ENCODE measurements at regions of chr18 and their contacts with region 1.

Region 1: DNA sequence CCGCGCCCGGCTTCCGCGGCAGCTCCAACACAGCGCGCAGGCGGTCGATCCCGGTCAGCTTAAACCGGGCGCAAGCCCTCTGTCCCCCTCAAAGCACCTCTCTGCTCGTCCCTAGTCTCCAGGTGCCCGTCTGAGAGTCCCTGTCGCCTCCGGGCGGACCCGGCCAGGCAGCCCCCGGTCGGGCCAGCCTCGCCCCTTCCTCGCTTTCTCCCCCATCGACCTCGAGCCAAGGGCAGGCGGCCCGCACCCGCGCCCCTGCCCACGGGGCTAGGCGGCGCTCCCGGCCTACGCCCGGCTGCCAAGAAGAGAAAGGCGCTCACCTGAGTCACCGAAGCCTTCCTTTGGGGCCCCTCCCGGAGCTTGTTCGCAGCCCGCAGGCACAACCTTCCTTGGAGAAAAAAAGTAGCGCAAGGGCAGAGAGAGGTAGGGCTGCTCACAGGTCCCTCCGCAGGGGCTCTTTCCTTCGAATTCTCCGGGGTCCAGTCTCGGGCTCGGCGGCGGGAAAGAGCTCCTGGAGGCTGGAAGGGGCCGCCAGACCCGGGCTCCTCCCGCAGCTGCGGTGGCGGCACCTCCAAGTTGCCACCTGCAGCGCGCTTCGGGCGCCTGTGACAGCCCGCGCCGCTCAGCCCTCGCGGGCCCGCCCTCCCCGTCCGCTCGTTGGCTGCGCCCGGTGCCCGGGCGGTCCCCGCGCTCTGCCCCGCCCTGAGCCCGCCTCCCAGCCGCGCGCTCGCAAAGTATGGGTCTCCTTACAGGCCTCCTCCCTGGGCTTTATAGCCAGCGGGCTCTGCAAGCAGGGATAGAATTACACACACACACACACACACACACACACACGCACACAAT is 86.5 kb upstream of the EPB41L3 start:
- DNase-seq: peak; percentile 82
- H3K4me3 Mint-ChIP-seq: peak overlapping the region; percentile 78
- H3K27ac Mint-ChIP-seq: no peak overlapping the region
- H3K4me1 Mint-ChIP-seq: peaks cover 3% of the 10 kb centered on the region
- H3K27me3 Mint-ChIP-seq: peaks cover 29% of the 10 kb centered on the region

Region 2: DNA sequence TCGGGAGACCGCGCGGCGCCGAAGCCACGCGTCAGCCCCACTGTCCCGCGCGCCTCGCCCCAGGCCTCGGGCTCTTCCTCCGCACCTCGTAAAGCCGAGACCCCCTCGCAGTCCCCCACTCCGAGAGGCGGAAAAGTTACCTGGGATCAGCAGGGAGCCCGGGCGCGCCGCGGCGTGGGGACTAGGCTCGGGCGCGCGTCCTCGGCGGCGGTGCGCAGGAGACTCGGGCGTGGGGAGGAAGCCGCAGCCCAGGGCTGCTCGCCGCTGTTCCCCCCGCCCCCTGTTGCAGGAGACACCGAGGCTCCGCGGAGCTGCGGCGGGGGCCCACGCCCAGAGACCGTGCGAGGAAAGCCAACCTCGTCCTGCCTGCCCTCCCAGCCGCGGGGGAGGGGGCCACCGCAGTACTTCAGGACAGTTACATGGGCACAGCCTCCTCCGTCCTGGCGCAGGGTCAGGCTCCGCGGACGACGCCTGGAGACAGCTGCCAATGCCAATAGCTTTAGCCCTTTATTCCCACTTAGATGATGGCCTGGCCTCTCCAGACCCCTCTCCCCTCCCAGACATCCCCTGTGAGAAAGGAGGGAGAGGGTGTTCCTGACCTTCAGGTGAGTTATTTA is 86.4 kb before region 1 on chr18 and contains the start of gene EPB41L3:
- intact Hi-C with region 1: loop called (anchors 5 kb)
- DNase-seq: no peak
- H3K4me3 Mint-ChIP-seq: no peak within 1 kb of the TSS
- H3K27ac Mint-ChIP-seq: no peak within 1 kb of the TSS
- H3K4me1 Mint-ChIP-seq: peaks cover 2% of the 10 kb centered on the region
- H3K27me3 Mint-ChIP-seq: peaks cover 44% of the 10 kb centered on the region
- total RNA-seq, gene EPB41L3: 1.5 TPM in 2 replicates

Region 3: DNA sequence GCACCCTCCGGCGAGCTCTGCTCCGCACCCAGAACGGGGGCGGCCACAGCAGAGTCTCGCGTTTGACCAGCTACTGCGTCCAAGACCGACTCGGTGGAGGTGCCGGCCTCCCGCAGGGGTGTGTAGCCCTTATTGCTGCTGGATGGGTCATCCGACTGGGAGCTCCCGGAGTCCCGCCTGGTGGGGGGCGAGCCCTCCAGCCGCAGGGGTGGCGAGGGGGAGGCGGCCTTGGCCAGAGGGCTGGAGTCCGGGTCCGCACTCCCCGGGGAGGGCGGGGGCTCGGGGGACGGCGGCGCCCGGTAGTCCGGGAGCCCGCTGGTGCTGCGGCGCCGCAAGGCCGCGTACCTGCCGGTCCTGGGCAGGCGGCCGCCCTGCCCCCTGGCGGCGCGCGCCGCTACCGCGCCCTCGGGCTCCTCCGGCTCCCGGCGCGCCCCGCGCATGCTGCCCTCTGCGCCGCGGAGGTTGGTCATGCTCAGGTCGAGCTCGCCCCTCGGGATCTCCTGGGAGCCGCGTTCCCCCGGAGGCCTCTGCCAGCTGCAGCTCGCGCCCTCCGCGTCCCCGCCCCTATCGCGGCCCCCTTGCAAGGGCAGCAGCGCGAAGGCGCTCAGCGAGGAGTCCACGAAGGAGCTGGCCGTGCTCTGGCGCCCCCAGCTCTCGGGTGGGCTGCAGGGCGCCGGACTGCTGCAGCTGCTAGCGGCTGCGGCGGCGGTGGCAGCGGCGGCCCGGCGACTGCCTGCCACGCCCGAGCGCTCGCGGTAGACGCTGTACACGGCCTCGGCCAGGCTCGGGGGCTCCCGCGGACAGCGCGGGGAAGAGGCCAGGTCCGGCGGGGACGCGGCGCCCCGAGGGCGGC is 260.3 kb after region 1 on chr18:
- intact Hi-C with region 1: loop called (anchors 10 kb)
- DNase-seq: peak; percentile 69
- H3K4me3 Mint-ChIP-seq: no peak overlapping the region
- H3K27ac Mint-ChIP-seq: no peak overlapping the region
- H3K4me1 Mint-ChIP-seq: no peaks in the 10 kb centered on the region
- H3K27me3 Mint-ChIP-seq: peaks cover 58% of the 10 kb centered on the region